ENCODE measurements at regions of chr10 and their contacts with region 1.

Region 1: DNA sequence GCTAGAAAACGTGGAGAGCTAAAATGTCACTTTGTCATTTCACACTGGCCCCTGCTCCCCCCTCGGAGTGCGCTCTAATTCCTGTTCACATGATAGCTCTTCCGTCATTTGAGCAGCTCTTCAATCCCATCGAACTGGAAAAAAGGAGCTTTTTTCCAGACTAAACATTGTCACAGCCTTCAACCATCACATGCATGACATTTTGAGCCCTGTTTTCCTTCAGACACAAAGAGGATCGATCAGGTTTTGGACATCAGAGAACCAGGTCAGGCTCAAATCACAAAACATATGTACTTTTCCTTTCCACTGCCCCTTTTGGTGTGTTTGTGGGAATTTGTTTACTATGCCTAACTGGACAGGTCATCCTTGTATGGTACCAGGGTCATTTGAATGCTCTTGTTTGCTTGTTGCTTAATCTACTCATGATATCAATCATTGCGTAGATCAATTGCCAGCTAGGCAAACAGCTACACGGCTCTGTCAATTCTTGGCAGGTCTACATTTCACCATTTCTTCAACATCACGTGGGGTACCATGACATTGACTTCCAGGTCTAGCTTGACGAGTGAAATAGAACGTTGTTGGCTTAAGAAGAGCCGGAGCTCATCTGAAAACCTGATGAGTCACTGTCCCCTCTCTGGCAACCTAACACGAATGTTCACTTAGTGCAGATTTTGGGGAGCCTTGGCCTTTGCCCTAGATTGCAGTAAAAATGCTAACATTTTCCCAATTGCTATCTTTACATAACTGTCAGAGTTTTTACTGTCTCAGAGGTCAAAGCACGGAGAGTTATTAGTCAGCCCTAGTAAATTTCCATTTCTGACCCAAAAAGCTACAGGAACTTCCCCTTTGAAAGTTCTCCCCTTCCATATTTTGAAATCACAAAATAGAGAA is 87.3 kb downstream of the LYZL2 start:
- DNase-seq: no peak
- ATAC-seq: peak in 1 of 8 donors; percentile 66
- H3K4me3 ChIP-seq: no peak overlapping the region
- H3K27ac ChIP-seq: peak overlapping the region in 1 of 10 donors; percentile 84
- H3K4me1 ChIP-seq: peaks cover 0 to 78% (median 9%) of the 10 kb centered on the region in 9 donors
- H3K27me3 ChIP-seq: no peaks in the 10 kb centered on the region
- CTCF ChIP-seq: no peak

Region 2: GRCh38 chr10:28946479-28946878 is 1595.8 kb before region 1 on chr10:
- intact Hi-C with region 1: no loop called
- DNase-seq: no peak
- ATAC-seq: peak in 1 of 8 donors; percentile 38
- H3K4me3 ChIP-seq: no peak overlapping the region
- H3K27ac ChIP-seq: no peak overlapping the region
- H3K4me1 ChIP-seq: peaks cover 0 to 17% (median 6%) of the 10 kb centered on the region in 9 donors
- H3K27me3 ChIP-seq: no peaks in the 10 kb centered on the region
- CTCF ChIP-seq: no peak

Region 3: GRCh38 chr10:30583778-30584415 is 41.6 kb after region 1 on chr10:
- intact Hi-C with region 1: loop called in 6 of 10 experiments (anchors 5 to 10 kb)
- DNase-seq: peak; percentile 38 to 86
- ATAC-seq: peak; percentile 86 to 97 (median 93)
- H3K4me3 ChIP-seq: peak overlapping the region in 9 of 10 donors; percentile 6 to 46 (median 40)
- H3K27ac ChIP-seq: peak overlapping the region; percentile 64 to 90 (median 84)
- H3K4me1 ChIP-seq: peaks cover 0 to 44% (median 22%) of the 10 kb centered on the region in 9 donors
- H3K27me3 ChIP-seq: no peaks in the 10 kb centered on the region
- CTCF ChIP-seq: no peak

Measured in heart right ventricle (tissue), 16 donors.